ENCODE measurements at regions of chr11 and their contacts with region 1.

Region 1: DNA sequence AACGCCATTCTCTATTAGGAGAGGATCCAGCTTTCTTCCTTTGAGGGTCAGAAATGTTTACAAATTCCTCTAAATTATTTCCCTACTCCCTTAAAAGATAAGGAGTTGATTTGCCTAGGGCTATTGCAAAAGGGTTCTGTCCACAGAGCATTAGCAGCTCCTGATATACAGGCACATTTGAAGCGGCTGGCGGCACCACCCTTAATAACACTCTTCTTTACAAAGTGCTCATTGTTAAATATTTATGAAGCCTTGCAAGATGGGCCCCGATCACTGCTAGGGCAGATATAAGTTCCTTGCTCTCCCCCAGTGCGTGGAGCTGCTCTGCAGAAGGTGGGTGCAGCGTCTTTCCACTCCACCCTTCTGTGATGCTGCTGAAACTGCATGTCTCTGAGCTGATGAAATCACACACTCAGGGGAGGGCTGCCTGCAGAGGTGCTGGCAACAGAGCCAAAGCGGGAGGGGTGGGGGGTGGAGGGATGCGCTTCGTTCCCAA is 116.7 kb upstream of the NTM start:
- DNase-seq: peak; percentile 52 to 53
- H3K4me3 ChIP-seq: peak overlapping the region; percentile 55 to 74 (median 58)
- H3K27ac ChIP-seq: peak overlapping the region; percentile 88
- H3K4me1 ChIP-seq: peaks cover 2 to 8% (median 6%) of the 10 kb centered on the region in 4 experiments; a peak in 5 of 7 replicates
- H3K27me3 ChIP-seq: no peaks in the 10 kb centered on the region
- CTCF ChIP-seq: no peak
- EP300 ChIP-seq: no peak
- POLR2A ChIP-seq: peak in 1 of 2 experiments; percentile 27; a peak in 1 of 3 replicates
- RAD21 ChIP-seq: no peak

Region 2: DNA sequence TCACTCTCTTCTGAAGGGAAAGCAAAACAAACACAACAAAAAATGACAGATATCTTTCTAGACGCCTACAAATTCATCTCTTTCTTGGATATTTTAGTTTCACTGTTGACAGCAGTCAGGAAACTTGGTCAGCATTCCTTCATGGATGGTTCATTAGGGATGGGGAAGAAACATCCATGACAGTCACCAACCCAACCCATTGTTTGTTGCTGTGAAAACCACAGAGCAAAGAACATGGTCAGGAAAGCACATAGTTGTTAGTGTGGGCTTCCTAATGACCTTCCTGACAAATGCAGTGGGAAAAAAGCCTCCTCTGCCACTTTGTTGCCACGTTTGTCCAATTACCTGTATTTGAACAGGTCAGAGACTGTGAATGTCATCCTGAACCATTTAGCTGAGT is 197.7 kb before region 1 on chr11:
- CTCF ChIA-PET with region 1: no interaction called
- POLR2A ChIA-PET with region 1: no interaction called
- DNase-seq: no peak
- H3K4me3 ChIP-seq: no peak overlapping the region
- H3K27ac ChIP-seq: no peak overlapping the region
- H3K4me1 ChIP-seq: peaks cover 2 to 10% (median 5%) of the 10 kb centered on the region in 4 experiments; a peak in 2 of 7 replicates
- H3K27me3 ChIP-seq: no peaks in the 10 kb centered on the region
- CTCF ChIP-seq: no peak
- EP300 ChIP-seq: no peak
- POLR2A ChIP-seq: no peak
- RAD21 ChIP-seq: no peak

Region 3: GRCh38 chr11:131195661-131196517 is 57.8 kb before region 1 on chr11:
- CTCF ChIA-PET with region 1: no interaction called
- POLR2A ChIA-PET with region 1: no interaction called
- DNase-seq: no peak
- H3K4me3 ChIP-seq: no peak overlapping the region
- H3K27ac ChIP-seq: no peak overlapping the region
- H3K4me1 ChIP-seq: no peaks in the 10 kb centered on the region; a peak in 1 of 7 replicates
- H3K27me3 ChIP-seq: peaks cover 0 to 2% (median 0%) of the 10 kb centered on the region in 4 experiments; a peak in 1 of 7 replicates
- CTCF ChIP-seq: no peak
- EP300 ChIP-seq: no peak
- POLR2A ChIP-seq: no peak
- RAD21 ChIP-seq: no peak

Region 4: DNA sequence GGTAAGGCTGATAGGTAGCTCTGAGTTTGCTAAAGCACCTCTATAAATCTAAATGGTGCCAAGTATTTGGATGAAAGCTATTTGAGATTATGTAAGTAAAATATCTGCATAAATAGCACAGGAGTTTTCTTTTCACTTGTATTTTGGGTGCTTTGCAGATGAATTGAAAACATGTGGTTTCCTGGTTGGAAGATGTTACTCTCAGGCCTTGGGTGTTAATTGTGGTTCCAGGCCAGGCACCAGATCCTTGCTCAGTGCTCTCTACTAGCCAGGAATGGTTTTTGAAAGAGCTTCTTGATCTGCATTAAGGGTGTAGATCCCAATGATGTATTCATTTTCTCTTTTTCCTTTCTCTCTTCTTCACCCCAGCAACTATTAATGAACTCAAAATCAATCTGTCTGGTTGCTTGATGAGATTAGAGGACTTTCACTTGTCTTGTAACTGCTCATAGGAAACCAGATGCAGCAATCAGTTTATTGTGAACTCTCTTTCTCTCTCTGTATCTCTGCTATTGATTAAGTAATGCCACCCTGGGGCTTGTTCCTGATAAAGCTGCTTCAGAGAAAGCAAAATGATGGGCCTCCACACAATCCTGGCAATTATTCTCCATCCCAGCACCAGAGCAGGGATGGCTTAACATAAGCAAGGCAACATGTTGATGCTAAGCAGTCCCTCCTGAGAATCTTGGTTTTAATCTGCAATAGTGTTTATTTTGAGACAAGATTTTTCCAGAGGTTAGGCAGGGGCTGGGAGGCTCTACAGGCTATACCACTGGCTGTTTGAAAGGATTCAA is 30.3 kb before region 1 on chr11:
- CTCF ChIA-PET with region 1: interaction called, 3 read pairs
- POLR2A ChIA-PET with region 1: interaction called, 24 read pairs
- DNase-seq: no peak
- H3K4me3 ChIP-seq: no peak overlapping the region
- H3K27ac ChIP-seq: no peak overlapping the region; the same call in 1 of the 2 replicates
- H3K4me1 ChIP-seq: peaks cover 5 to 21% (median 17%) of the 10 kb centered on the region in 4 experiments; a peak in 6 of 7 replicates
- H3K27me3 ChIP-seq: no peaks in the 10 kb centered on the region
- CTCF ChIP-seq: no peak
- EP300 ChIP-seq: no peak
- POLR2A ChIP-seq: no peak
- RAD21 ChIP-seq: no peak

Region 5: GRCh38 chr11:131240421-131240820 is 13.3 kb before region 1 on chr11:
- CTCF ChIA-PET with region 1: interaction called, 9 read pairs
- POLR2A ChIA-PET with region 1: interaction called, 39 read pairs
- DNase-seq: no peak
- H3K4me3 ChIP-seq: no peak overlapping the region
- H3K27ac ChIP-seq: no peak overlapping the region
- H3K4me1 ChIP-seq: peaks cover 0 to 6% (median 3%) of the 10 kb centered on the region in 4 experiments; a peak in 5 of 7 replicates
- H3K27me3 ChIP-seq: no peaks in the 10 kb centered on the region
- CTCF ChIP-seq: no peak
- EP300 ChIP-seq: no peak
- POLR2A ChIP-seq: no peak
- RAD21 ChIP-seq: no peak

Region 6: DNA sequence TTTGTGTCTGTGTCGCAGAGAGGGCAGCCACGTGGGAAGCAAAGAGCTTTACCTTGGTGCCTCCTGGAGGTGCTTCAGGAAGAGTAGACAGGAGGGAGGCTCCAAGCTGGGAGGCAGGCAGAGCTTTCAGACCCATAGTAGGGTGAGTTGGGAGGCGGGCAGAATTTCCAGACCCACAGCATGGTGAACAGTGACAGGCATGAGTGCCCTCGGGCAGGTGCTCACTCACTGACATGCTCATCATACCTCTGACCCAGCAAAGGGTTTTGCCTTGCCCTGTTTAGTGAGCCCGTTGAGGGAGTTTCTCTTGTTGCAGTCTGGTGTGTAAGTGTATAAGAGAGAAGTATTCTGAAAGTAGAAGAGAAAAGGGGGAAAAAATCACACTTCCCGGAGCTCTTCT is 30.3 kb after region 1 on chr11:
- CTCF ChIA-PET with region 1: no interaction called
- POLR2A ChIA-PET with region 1: interaction called, 13 read pairs
- DNase-seq: no peak
- H3K4me3 ChIP-seq: no peak overlapping the region
- H3K27ac ChIP-seq: no peak overlapping the region
- H3K4me1 ChIP-seq: no peaks in the 10 kb centered on the region
- H3K27me3 ChIP-seq: no peaks in the 10 kb centered on the region
- CTCF ChIP-seq: no peak
- EP300 ChIP-seq: no peak
- POLR2A ChIP-seq: no peak
- RAD21 ChIP-seq: no peak; a peak in 1 of 4 replicates

Region 7: GRCh38 chr11:131350872-131351271 is 97.2 kb after region 1 on chr11:
- CTCF ChIA-PET with region 1: no interaction called
- POLR2A ChIA-PET with region 1: interaction called, 10 read pairs
- DNase-seq: no peak
- H3K4me3 ChIP-seq: no peak overlapping the region
- H3K27ac ChIP-seq: no peak overlapping the region
- H3K4me1 ChIP-seq: peaks cover 0 to 16% (median 6%) of the 10 kb centered on the region in 4 experiments; a peak in 4 of 7 replicates
- H3K27me3 ChIP-seq: no peaks in the 10 kb centered on the region
- CTCF ChIP-seq: no peak
- EP300 ChIP-seq: no peak
- POLR2A ChIP-seq: no peak
- RAD21 ChIP-seq: no peak

Region 8: DNA sequence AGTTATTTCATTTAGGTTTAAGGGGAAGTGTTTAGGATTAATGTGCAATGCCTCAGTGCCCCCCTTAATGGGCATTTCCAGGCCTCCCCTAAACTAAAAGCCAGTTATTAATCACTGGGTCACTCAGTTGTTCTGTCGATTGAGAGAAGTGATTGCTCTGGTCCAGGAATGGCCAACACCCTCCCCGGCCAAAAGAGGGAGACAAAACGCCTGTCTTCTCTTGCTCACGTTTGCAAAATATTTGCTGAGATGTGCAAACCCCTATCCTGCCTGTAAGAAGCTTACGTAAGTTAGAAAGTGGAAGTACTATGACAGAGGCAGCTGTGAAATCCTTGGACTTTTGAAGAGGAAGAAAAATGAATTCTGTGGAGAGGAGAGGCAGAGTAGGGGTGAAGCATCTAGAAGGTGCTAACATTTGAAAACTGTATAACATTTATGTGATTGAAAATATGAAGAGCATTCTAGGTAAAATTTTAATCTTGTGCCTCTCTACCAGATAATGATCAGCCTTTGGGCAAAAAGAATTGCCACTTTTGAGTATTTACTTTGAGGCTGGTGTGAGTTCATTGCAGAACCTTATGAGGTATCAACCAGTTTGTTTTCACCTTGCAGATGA is 154.4 kb after region 1 on chr11:
- CTCF ChIA-PET with region 1: no interaction called
- POLR2A ChIA-PET with region 1: no interaction called
- DNase-seq: peak; percentile 23 to 59
- H3K4me3 ChIP-seq: no peak overlapping the region
- H3K27ac ChIP-seq: no peak overlapping the region
- H3K4me1 ChIP-seq: peaks cover 0 to 3% (median 1%) of the 10 kb centered on the region in 4 experiments; a peak in 3 of 7 replicates
- H3K27me3 ChIP-seq: no peaks in the 10 kb centered on the region
- CTCF ChIP-seq: peak; percentile 76 to 83 (median 79)
- EP300 ChIP-seq: no peak
- POLR2A ChIP-seq: no peak
- RAD21 ChIP-seq: peak; percentile 78 to 80